PC-3 (cell line): ENCODE measurements at regions of chr9 and their contacts with region 1.

Region 1: GRCh38 chr9:105414947-105415661 is 32.7 kb upstream of the FSD1L start:
- DNase-seq: peak; percentile 56
- ATAC-seq: peak; percentile 78
- H3K4me3 ChIP-seq: no peak overlapping the region
- H3K27ac ChIP-seq: no peak overlapping the region
- H3K4me1 ChIP-seq: peaks cover 8% of the 10 kb centered on the region; the same call in 1 of the 2 replicates
- H3K27me3 ChIP-seq: no peaks in the 10 kb centered on the region
- CTCF ChIP-seq: peak; percentile 94

Region 2: GRCh38 chr9:104780799-104781395 is 634.2 kb before region 1 on chr9:
- CTCF ChIA-PET with region 1: no interaction called
- POLR2A ChIA-PET with region 1: no interaction called
- intact Hi-C with region 1: loop called (anchors 2 kb)
- DNase-seq: peak; percentile 75
- ATAC-seq: peak; percentile 72
- H3K4me3 ChIP-seq: no peak overlapping the region
- H3K27ac ChIP-seq: peak overlapping the region; percentile 37; the same call in 1 of the 2 replicates
- H3K4me1 ChIP-seq: peaks cover 13% of the 10 kb centered on the region; the same call in 1 of the 2 replicates
- H3K27me3 ChIP-seq: no peaks in the 10 kb centered on the region
- CTCF ChIP-seq: peak; percentile 79

Region 3: GRCh38 chr9:104863180-104863883 is 551.8 kb before region 1 on chr9:
- CTCF ChIA-PET with region 1: no interaction called
- POLR2A ChIA-PET with region 1: no interaction called
- intact Hi-C with region 1: loop called (anchors 2 kb)
- DNase-seq: peak; percentile 79
- ATAC-seq: peak; percentile 93
- H3K4me3 ChIP-seq: no peak overlapping the region
- H3K27ac ChIP-seq: peak overlapping the region; percentile 27
- H3K4me1 ChIP-seq: peaks cover 22% of the 10 kb centered on the region
- H3K27me3 ChIP-seq: no peaks in the 10 kb centered on the region
- CTCF ChIP-seq: peak; percentile 85

Region 4: DNA sequence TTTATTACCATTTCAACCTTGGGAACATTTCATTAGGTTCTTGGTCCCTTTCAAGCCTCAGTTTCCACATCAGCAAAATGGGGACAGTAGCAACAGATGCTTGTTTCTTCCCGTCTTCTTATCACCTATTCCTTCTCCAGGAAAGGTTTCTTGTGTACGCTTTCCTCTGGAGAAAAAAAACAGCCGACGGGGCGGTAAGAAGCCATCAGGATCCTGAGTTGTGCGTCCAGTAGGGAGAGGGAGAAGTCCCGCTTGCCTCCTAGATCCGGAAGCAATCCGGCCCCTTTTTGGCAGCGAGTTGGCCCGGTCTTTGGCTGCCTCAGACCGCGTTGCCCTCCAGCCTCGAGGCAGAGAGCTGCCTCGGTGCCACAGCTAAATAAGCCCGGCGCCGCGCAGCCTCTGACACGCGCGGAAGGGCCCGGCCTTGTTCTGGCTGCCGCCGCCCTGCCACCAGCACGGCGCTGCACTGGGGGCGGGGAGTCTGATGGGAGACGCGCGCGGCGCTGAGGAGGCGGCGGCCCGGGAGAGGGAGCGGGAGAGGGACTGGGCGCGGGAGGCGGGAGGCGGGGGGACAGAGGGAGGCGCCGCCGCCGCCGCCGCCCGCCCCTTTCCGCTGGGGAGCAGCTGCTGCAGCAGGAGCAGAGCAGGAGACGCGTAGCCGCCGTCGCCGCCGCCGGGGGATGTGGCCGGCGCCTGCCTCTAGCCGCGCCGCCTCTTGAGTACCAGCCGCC is 170.9 kb before region 1 on chr9 and contains the start of gene SLC44A1:
- CTCF ChIA-PET with region 1: interaction called, 6 read pairs
- POLR2A ChIA-PET with region 1: interaction called, 3 read pairs
- intact Hi-C with region 1: loop called (anchors 1 kb)
- DNase-seq: peak; percentile 90
- ATAC-seq: peak; percentile 92
- H3K4me3 ChIP-seq: peak within 1 kb of the TSS; percentile 87
- H3K27ac ChIP-seq: peak within 1 kb of the TSS; percentile 48
- H3K4me1 ChIP-seq: peaks cover 11% of the 10 kb centered on the region
- H3K27me3 ChIP-seq: no peaks in the 10 kb centered on the region
- CTCF ChIP-seq: no peak
- total RNA-seq, gene SLC44A1: 15.3 and 16.1 TPM in 2 replicates

Region 5: DNA sequence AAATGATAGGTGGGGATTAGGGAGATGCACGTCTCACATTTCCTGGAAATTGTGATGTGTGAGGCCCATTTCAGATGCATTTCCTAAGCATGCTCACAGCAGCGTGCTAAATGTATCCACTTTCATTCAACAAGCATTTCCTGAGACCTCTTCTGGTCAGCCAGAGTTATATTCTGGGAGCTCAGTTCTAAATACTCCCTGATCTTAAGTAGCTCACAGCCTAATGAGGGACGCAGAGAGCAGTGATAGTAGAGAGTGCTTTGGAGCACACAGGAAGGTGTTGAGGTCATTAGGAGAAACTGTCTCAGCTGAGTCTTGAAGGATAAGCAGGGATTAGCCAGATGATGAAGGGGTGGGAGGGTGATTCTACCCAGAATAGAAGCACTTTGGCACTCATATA is 13.5 kb before region 1 on chr9:
- CTCF ChIA-PET with region 1: no interaction called
- POLR2A ChIA-PET with region 1: no interaction called
- intact Hi-C with region 1: no loop called
- DNase-seq: no peak
- ATAC-seq: peak; percentile 56
- H3K4me3 ChIP-seq: no peak overlapping the region
- H3K27ac ChIP-seq: no peak overlapping the region
- H3K4me1 ChIP-seq: no peaks in the 10 kb centered on the region
- H3K27me3 ChIP-seq: no peaks in the 10 kb centered on the region
- CTCF ChIP-seq: no peak; the same call in 1 of the 2 replicates

Region 6: DNA sequence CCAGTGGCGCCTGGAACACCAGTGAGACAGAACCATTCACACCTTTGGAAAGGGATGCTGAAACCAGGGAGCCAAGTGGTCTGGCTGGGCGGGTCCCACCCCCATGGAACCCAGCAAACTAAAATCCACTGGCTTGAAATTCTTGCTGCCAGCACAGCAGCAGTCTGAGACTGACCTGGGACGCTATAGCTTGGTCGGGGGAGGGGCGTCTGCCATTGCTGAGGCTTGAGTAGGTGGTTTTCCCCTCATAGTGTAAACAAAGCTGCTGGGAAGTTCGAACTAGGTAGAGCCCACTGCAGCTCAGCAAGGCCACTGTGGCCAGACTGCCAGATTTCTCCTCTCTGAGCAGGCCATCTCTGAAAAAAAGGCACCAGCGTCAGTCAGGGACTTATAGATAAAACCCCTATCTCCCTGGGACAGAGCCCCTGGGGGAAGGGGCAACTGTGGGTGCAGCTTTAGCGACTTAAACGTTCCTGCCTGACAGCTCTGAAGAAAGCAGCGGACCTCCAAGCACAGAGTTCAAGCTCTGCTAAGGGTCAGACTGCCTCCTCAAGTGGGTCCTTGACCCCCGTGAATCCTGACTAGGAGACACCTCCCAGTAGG is 100.8 kb after region 1 on chr9:
- CTCF ChIA-PET with region 1: no interaction called
- POLR2A ChIA-PET with region 1: no interaction called
- intact Hi-C with region 1: no loop called
- DNase-seq: no peak
- ATAC-seq: no peak
- H3K4me3 ChIP-seq: no peak overlapping the region
- H3K27ac ChIP-seq: no peak overlapping the region
- H3K4me1 ChIP-seq: no peaks in the 10 kb centered on the region
- H3K27me3 ChIP-seq: no peaks in the 10 kb centered on the region
- CTCF ChIP-seq: no peak